CD4-positive, alpha-beta T cell (primary cell): ENCODE measurements at regions of chr1 and their contacts with region 1.

Region 1: GRCh38 chr1:202184750-202185460 is 8.7 kb upstream of the LGR6 start:
- DNase-seq: peak; percentile 46 to 84 (median 58)
- ATAC-seq: peak; percentile 58
- H3K4me3 ChIP-seq: no peak overlapping the region
- H3K4me3 Mint-ChIP-seq: no peak overlapping the region
- H3K27ac ChIP-seq: no peak overlapping the region
- H3K27ac Mint-ChIP-seq: no peak overlapping the region
- H3K4me1 ChIP-seq: peaks cover 7% of the 10 kb centered on the region
- H3K4me1 Mint-ChIP-seq: peaks cover 14% of the 10 kb centered on the region
- H3K27me3 ChIP-seq: no peaks in the 10 kb centered on the region
- H3K27me3 Mint-ChIP-seq: no peaks in the 10 kb centered on the region
- CTCF ChIP-seq: peak; percentile 84

Region 2: GRCh38 chr1:202154766-202155477 is 30.0 kb before region 1 on chr1:
- CTCF ChIA-PET with region 1: interaction called, 15 read pairs
- POLR2A ChIA-PET with region 1: no interaction called
- intact Hi-C with region 1: no loop called
- DNase-seq: peak in 11 of 14 experiments; percentile 34 to 81 (median 44)
- ATAC-seq: peak; percentile 81
- H3K4me3 ChIP-seq: no peak overlapping the region
- H3K4me3 Mint-ChIP-seq: peak overlapping the region; percentile 2
- H3K27ac ChIP-seq: peak overlapping the region in 1 of 2 donors; percentile 56
- H3K27ac Mint-ChIP-seq: peak overlapping the region; percentile 59
- H3K4me1 ChIP-seq: peaks cover 66% of the 10 kb centered on the region
- H3K4me1 Mint-ChIP-seq: peaks cover 51% of the 10 kb centered on the region
- H3K27me3 ChIP-seq: no peaks in the 10 kb centered on the region
- H3K27me3 Mint-ChIP-seq: no peaks in the 10 kb centered on the region
- CTCF ChIP-seq: peak; percentile 55

Region 3: DNA sequence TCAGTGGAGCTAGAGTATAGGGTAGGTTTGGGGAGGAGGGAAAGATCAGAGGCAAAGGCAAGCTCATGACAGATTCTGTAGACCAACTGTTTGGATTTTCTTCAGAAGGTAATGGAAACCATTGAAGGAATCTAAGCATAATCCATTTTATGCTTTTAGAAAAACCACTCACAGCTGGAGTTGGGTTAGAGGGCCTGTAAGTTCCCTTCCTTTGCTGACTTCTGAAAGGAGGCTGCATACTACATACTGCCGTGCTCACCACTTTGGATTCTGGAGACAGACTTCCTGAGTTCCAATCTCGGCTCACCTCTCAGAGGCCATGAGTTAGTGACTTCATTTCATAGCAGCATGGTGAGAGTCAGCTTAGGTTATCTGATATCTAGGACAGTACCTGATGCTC is 531.7 kb after region 1 on chr1:
- CTCF ChIA-PET with region 1: interaction called, 5 read pairs
- POLR2A ChIA-PET with region 1: no interaction called
- intact Hi-C with region 1: loop called in 1 of 2 experiments (anchors 1 kb)
- DNase-seq: no peak
- ATAC-seq: no peak
- H3K4me3 ChIP-seq: no peak overlapping the region
- H3K4me3 Mint-ChIP-seq: no peak overlapping the region
- H3K27ac ChIP-seq: no peak overlapping the region
- H3K27ac Mint-ChIP-seq: no peak overlapping the region
- H3K4me1 ChIP-seq: no peaks in the 10 kb centered on the region
- H3K4me1 Mint-ChIP-seq: peaks cover 4% of the 10 kb centered on the region
- H3K27me3 ChIP-seq: peaks cover 8 to 19% of the 10 kb centered on the region in 2 experiments
- H3K27me3 Mint-ChIP-seq: peaks cover 17% of the 10 kb centered on the region
- CTCF ChIP-seq: no peak